Activated naive CD4-positive, alpha-beta T cell treated with anti-CD3 and anti-CD28 coated beads for 36 hours (primary cell): ENCODE measurements at regions of chr2 and their contacts with region 1.

Region 1: DNA sequence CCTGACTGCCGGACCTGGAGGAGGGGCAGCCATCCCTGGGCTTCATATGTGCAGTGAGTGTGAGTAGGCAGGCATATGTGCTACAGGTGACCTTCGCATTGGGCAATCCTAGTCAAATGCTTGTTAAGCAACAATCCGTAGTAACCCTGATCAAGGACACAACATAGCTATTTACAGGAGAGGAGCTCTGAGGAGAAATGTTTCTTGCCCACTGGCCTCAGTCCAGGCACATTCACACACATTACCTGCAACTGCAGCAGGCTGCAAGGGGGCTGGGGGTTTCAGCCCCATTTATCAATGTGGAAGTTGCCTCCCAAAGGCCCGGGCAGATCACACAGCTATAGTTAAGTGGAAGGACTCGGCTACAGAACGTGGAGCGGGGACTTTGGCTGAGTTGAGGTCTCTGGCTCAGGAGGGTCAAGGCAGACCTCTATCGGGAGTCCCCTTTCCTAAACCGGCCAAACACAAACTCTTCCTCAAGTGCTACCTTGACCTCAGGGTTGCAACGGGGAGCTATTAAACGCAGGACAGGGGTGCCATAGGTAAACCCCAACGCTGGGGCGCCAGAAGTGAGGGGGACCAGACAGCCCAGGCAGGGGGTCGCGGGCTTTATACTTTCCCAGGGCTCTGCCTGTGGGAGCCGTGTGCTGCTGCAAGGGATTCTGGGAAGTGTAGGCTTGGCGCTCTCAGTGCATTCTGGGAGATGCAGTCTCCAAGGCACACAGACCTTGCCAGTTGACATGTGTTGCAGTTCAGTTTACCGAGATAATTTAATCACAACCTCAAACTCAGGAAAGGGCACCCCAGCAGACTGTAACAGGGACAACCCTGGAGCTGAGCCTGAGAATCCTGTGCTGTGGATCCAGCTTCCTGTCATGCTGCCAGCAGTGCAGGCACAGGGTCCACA is 9.4 kb downstream of the KHK start:
- DNase-seq: peak; percentile 66
- H3K4me3 Mint-ChIP-seq: peak overlapping the region; percentile 62
- H3K27ac Mint-ChIP-seq: no peak overlapping the region
- H3K4me1 Mint-ChIP-seq: peaks cover 14% of the 10 kb centered on the region
- H3K27me3 Mint-ChIP-seq: no peaks in the 10 kb centered on the region

Region 2: GRCh38 chr2:25347205-25347815 is 1748.7 kb before region 1 on chr2:
- CTCF ChIA-PET with region 1: no interaction called
- intact Hi-C with region 1: no loop called
- DNase-seq: peak; percentile 66
- H3K4me3 Mint-ChIP-seq: no peak overlapping the region
- H3K27ac Mint-ChIP-seq: no peak overlapping the region
- H3K4me1 Mint-ChIP-seq: peaks cover 24% of the 10 kb centered on the region
- H3K27me3 Mint-ChIP-seq: no peaks in the 10 kb centered on the region

Region 3: GRCh38 chr2:27191053-27191829 is 95.2 kb after region 1 on chr2:
- CTCF ChIA-PET with region 1: interaction called, 11 read pairs
- intact Hi-C with region 1: loop called (anchors 1 kb)
- DNase-seq: peak; percentile 71
- H3K4me3 Mint-ChIP-seq: no peak overlapping the region
- H3K27ac Mint-ChIP-seq: no peak overlapping the region
- H3K4me1 Mint-ChIP-seq: no peaks in the 10 kb centered on the region
- H3K27me3 Mint-ChIP-seq: no peaks in the 10 kb centered on the region

Region 4: GRCh38 chr2:27264753-27265535 is 168.9 kb after region 1 on chr2:
- CTCF ChIA-PET with region 1: interaction called, 3 read pairs
- intact Hi-C with region 1: loop called (anchors 5 kb)
- DNase-seq: peak; percentile 81
- H3K4me3 Mint-ChIP-seq: peak overlapping the region; percentile 77
- H3K27ac Mint-ChIP-seq: no peak overlapping the region
- H3K4me1 Mint-ChIP-seq: peaks cover 26% of the 10 kb centered on the region
- H3K27me3 Mint-ChIP-seq: peaks cover 44% of the 10 kb centered on the region

Region 5: GRCh38 chr2:28583899-28584553 is 1488.0 kb after region 1 on chr2:
- CTCF ChIA-PET with region 1: no interaction called
- intact Hi-C with region 1: no loop called
- DNase-seq: peak; percentile 89
- H3K4me3 Mint-ChIP-seq: peak overlapping the region; percentile 39
- H3K27ac Mint-ChIP-seq: peak overlapping the region; percentile 77
- H3K4me1 Mint-ChIP-seq: peaks cover 45% of the 10 kb centered on the region
- H3K27me3 Mint-ChIP-seq: no peaks in the 10 kb centered on the region